HepG2 (cell line): ENCODE measurements at regions of chr15 and their contacts with region 1.

Region 1: GRCh38 chr15:91302588-91303439 is 202.8 kb downstream of the SV2B start:
- DNase-seq: peak; percentile 45
- ATAC-seq: peak; percentile 78
- H3K4me3 ChIP-seq: no peak overlapping the region
- H3K27ac ChIP-seq: no peak overlapping the region
- H3K4me1 ChIP-seq: no peaks in the 10 kb centered on the region
- H3K27me3 ChIP-seq: peaks cover 1 to 5% of the 10 kb centered on the region in 2 experiments; a peak in 4 of 5 replicates
- CTCF ChIP-seq: peak; percentile 83
- EP300 ChIP-seq: no peak
- POLR2A ChIP-seq: no peak
- RAD21 ChIP-seq: peak; percentile 60; the same call in 1 of the 2 replicates

Region 2: GRCh38 chr15:91271565-91272153 is 31.2 kb before region 1 on chr15:
- CTCF ChIA-PET with region 1: no interaction called
- POLR2A ChIA-PET with region 1: no interaction called
- in situ Hi-C with region 1: no loop called
- intact Hi-C with region 1: no loop called
- DNase-seq: peak; percentile 35
- ATAC-seq: peak; percentile 52; the same call in 2 of the 3 replicates
- H3K4me3 ChIP-seq: no peak overlapping the region
- H3K27ac ChIP-seq: no peak overlapping the region
- H3K4me1 ChIP-seq: no peaks in the 10 kb centered on the region
- H3K27me3 ChIP-seq: peaks cover 0 to 4% of the 10 kb centered on the region in 2 experiments; a peak in 1 of 5 replicates
- CTCF ChIP-seq: peak; percentile 79
- EP300 ChIP-seq: no peak
- POLR2A ChIP-seq: no peak
- RAD21 ChIP-seq: no peak

Region 3: GRCh38 chr15:91282486-91282885 is 20.3 kb before region 1 on chr15:
- CTCF ChIA-PET with region 1: no interaction called
- POLR2A ChIA-PET with region 1: no interaction called
- in situ Hi-C with region 1: no loop called
- intact Hi-C with region 1: no loop called
- DNase-seq: no peak
- ATAC-seq: no peak
- H3K4me3 ChIP-seq: no peak overlapping the region
- H3K27ac ChIP-seq: no peak overlapping the region
- H3K4me1 ChIP-seq: no peaks in the 10 kb centered on the region
- H3K27me3 ChIP-seq: peaks cover 0 to 7% of the 10 kb centered on the region in 2 experiments; a peak in 2 of 5 replicates
- CTCF ChIP-seq: no peak
- EP300 ChIP-seq: no peak
- POLR2A ChIP-seq: no peak
- RAD21 ChIP-seq: no peak

Region 4: DNA sequence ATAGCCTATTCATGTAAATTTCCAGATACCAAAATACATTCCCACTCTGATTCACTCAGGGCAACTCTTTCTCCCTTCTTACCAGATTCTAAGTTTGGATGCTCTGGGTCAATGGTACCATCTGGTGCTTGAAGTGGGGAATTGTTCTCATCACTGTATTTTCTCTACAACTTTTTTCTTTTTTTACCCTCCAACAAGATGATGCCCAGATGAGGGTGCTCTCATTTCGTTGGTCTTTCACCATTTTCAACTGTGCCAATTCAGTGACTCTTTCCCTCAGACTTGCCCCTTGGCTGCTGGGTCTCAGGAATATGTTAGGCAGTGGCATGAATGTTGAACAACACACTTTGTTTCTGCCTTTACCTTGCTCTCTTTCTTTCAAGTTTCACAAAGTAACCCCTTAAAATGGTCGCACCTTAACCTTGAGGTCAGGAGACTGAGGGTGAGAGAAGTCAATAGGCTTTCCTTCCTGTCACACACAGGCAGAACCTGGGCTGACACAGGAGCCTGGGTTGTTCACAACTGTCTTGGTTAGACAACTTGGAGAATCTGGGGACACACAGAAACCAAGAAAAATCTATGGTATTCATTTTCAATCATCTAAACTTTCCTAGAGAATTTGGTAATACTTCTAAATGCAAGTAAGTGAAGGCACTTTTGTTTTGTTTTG is 220.0 kb after region 1 on chr15:
- CTCF ChIA-PET with region 1: no interaction called
- POLR2A ChIA-PET with region 1: no interaction called
- in situ Hi-C with region 1: no loop called
- intact Hi-C with region 1: loop called (anchors 2 kb)
- DNase-seq: no peak
- ATAC-seq: no peak
- H3K4me3 ChIP-seq: no peak overlapping the region
- H3K27ac ChIP-seq: no peak overlapping the region
- H3K4me1 ChIP-seq: no peaks in the 10 kb centered on the region
- H3K27me3 ChIP-seq: no peaks in the 10 kb centered on the region
- CTCF ChIP-seq: no peak
- EP300 ChIP-seq: no peak
- POLR2A ChIP-seq: no peak
- RAD21 ChIP-seq: no peak

Region 5: DNA sequence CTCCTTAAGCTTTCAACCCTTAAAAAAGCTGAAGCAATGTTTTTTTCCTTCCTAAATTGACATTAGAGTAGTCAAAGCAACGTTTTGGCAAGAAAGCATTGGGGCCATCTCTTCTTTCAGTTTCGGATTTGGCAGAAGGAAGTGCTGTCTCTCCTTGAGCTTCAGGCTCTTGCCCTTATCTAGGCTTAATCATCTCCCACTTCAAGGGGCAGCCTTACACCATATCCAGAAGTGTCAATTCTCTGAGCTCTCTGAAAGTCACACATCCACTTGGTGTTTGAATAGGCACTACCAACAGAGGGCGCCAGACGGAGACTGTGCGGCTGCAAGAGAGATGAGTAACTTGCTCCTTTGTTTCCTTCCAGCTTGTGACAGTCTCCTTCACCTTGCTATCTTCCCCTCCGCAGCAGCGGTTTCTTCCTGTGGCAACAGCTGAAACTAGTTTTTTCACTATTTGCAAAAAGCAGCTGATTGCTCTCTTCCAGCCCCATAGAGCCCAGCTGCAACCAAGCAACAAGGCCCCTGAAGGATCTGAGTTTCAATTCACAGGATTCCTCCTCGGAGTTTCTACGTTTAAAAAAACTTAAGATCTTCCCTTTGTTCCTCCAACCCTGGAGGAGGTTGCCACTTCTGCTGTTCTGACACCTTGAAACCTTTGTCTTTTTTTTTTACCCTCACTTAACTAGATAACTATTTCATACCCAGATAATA is 403.7 kb after region 1 on chr15:
- CTCF ChIA-PET with region 1: no interaction called
- POLR2A ChIA-PET with region 1: no interaction called
- in situ Hi-C with region 1: no loop called
- intact Hi-C with region 1: loop called (anchors 5 kb)
- DNase-seq: peak; percentile 38
- ATAC-seq: peak; percentile 80
- H3K4me3 ChIP-seq: no peak overlapping the region
- H3K27ac ChIP-seq: no peak overlapping the region
- H3K4me1 ChIP-seq: no peaks in the 10 kb centered on the region
- H3K27me3 ChIP-seq: no peaks in the 10 kb centered on the region; a peak in 1 of 5 replicates
- CTCF ChIP-seq: peak; percentile 73
- EP300 ChIP-seq: no peak
- POLR2A ChIP-seq: no peak
- RAD21 ChIP-seq: no peak

Region 6: GRCh38 chr15:91852741-91853510 is 550.1 kb after region 1 on chr15:
- CTCF ChIA-PET with region 1: interaction called, 15 read pairs
- POLR2A ChIA-PET with region 1: no interaction called
- in situ Hi-C with region 1: loop called (anchors 10 kb)
- intact Hi-C with region 1: no loop called
- DNase-seq: peak; percentile 13
- ATAC-seq: peak; percentile 97
- H3K4me3 ChIP-seq: peak overlapping the region; percentile 40 to 60 (median 46); a peak in 5 of 6 replicates
- H3K27ac ChIP-seq: no peak overlapping the region
- H3K4me1 ChIP-seq: no peaks in the 10 kb centered on the region
- H3K27me3 ChIP-seq: peaks cover 4 to 45% of the 10 kb centered on the region in 2 experiments; a peak in 4 of 5 replicates
- CTCF ChIP-seq: peak; percentile 71
- EP300 ChIP-seq: no peak
- POLR2A ChIP-seq: no peak
- RAD21 ChIP-seq: peak; percentile 42

Region 7: DNA sequence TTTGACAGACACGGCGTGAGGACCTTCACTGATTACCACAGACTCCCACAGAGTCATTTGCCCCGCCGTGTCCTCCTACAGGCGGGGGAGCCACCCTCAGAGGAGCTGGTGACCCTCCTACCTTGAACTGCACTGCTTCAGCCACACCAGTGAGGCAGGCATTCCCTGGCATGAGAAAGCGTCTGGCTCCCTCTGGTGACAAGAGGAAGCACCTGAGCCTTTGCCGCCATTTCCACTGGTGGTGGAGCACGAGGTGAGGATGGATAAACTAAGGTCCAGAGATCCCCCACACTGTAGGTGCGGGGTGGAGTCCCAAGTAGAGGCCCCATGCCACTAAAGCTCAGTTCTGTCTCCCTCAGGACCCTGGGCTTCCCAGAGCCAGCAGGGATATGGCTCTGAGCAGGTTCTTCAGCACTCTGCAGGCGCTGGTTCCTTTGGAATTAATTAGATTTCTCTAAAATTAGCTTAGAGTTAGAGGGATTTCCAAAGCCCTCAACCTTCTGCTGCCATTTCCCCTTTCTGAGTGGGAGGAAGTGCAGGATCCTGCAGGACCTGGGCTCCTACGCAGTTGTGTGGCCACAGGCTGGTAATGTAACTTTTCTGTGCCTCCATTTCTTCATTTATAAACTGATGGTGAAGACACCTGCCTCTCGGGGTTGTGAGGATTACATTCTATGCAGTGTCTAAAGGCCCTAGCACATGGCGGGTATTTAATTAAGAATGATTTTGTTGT is 774.7 kb after region 1 on chr15:
- CTCF ChIA-PET with region 1: interaction called, 13 read pairs
- POLR2A ChIA-PET with region 1: no interaction called
- in situ Hi-C with region 1: loop called (anchors 5 kb)
- intact Hi-C with region 1: loop called (anchors 1 kb)
- DNase-seq: peak; percentile 44
- ATAC-seq: peak; percentile 88
- H3K4me3 ChIP-seq: no peak overlapping the region
- H3K27ac ChIP-seq: no peak overlapping the region
- H3K4me1 ChIP-seq: no peaks in the 10 kb centered on the region
- H3K27me3 ChIP-seq: peaks cover 0 to 12% of the 10 kb centered on the region in 2 experiments; a peak in 3 of 5 replicates
- CTCF ChIP-seq: peak; percentile 90
- EP300 ChIP-seq: no peak
- POLR2A ChIP-seq: no peak
- RAD21 ChIP-seq: peak; percentile 64